Panc1 (cell line): ENCODE measurements at regions of chr11 and their contacts with region 1.

Region 1: DNA sequence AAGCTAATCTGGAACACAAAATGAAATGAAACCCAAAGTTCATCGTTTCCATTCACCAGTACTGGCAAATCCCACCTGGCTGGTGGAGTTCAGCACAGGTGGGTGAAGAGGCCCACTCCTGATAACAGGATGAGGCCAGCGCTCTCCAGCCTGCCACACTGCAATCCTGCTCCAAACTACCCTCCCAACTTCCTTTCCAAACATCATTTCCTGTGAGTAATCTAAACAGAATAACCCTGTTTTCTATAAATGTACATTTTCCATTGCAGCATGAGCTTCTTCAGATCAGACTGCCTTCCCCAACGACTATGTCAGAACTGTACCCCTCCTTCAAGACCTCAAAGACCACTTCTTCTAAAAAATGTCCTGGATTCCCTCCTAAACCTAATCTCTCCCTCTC is 15.9 kb upstream of the NFRKB start:
- DNase-seq: no peak
- ATAC-seq: no peak
- H3K4me3 ChIP-seq: no peak overlapping the region
- H3K27ac ChIP-seq: no peak overlapping the region
- H3K4me1 ChIP-seq: no peaks in the 10 kb centered on the region
- H3K27me3 ChIP-seq: no peaks in the 10 kb centered on the region
- CTCF ChIP-seq: no peak

Region 2: DNA sequence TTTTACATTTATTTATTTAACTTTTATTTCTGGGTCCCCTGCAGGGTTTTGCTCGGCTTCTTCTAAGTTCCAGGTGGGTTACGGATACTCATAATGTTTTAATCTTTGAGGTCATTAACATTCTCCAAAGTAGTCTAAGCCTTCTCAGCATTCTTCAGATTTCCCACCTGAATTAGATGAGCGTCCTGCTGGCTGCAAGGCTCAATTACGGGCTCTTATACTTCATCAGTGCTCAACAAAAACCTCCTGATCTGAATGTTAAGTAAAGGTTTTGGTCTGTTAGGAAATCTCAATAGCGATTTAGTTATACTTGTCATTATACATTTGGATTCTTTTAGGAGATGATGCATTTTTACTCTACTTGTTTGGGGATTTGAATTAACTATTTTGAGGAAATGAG is 11.4 kb after region 1 on chr11:
- CTCF ChIA-PET with region 1: no interaction called
- POLR2A ChIA-PET with region 1: no interaction called
- in situ Hi-C with region 1: no loop called
- intact Hi-C with region 1: no loop called
- DNase-seq: no peak
- ATAC-seq: no peak
- H3K4me3 ChIP-seq: no peak overlapping the region
- H3K27ac ChIP-seq: no peak overlapping the region
- H3K4me1 ChIP-seq: no peaks in the 10 kb centered on the region
- H3K27me3 ChIP-seq: no peaks in the 10 kb centered on the region
- CTCF ChIP-seq: no peak

Region 3: DNA sequence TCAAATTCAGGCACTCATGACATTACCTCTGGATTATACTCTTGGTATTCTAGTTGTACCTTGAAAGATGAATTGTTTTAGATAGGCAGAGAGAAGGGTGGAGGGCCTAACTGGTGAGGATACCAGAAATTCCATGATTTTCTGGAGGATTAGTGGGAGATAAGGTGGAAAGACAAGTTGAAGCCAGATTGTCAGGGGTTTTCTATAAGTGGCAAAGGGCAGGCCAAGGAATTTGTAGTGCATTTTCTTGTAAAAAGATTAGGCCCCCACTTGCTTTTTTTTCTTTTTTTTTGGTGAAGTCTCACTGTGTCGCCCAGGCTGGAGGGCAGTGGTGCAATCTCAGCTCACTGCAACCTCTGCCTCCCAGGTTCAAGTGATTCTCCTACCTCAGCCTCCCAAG is 119.8 kb after region 1 on chr11:
- CTCF ChIA-PET with region 1: interaction called, 14 read pairs
- POLR2A ChIA-PET with region 1: no interaction called
- in situ Hi-C with region 1: no loop called
- intact Hi-C with region 1: no loop called
- DNase-seq: no peak
- ATAC-seq: no peak
- H3K4me3 ChIP-seq: no peak overlapping the region
- H3K27ac ChIP-seq: no peak overlapping the region
- H3K4me1 ChIP-seq: no peaks in the 10 kb centered on the region
- H3K27me3 ChIP-seq: no peaks in the 10 kb centered on the region
- CTCF ChIP-seq: no peak